BJ (cell line): ENCODE measurements at regions of chr6 and their contacts with region 1.

Region 1: DNA sequence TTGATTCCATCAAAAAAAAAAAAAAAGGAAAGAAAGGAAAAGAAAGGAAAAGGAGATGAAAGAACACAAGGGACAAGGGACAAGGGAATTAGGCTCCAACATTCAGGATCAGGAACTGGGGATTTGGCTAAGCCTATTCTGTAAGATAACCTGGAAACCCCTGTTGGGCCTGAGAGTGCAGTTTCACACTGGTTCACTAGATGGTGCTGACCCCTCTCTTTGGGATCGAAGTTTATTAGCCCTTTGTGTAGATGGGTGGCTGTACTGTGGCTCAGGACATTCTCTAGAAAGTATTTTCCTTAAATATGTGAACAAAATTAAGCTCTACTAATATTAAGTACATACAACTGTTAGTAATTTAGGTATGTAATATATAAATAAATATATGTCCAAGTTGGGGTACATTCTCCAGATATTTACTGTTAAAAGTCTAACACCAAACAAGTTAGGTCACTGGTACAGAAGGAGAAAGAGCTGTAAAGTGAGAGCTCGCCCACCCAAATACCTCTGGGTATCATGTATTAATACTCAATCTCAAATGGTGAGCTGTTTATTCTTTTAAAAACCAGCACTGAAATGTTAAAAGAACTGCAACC is 6.3 kb downstream of the OR2A4 start:
- DNase-seq: peak; percentile 18
- H3K4me3 ChIP-seq: no peak overlapping the region
- H3K27me3 ChIP-seq: no peaks in the 10 kb centered on the region
- CTCF ChIP-seq: peak; percentile 93

Region 2: GRCh38 chr6:131379948-131380347 is 315.0 kb before region 1 on chr6:
- CTCF ChIA-PET with region 1: no interaction called
- POLR2A ChIA-PET with region 1: no interaction called
- DNase-seq: peak; percentile 54
- H3K4me3 ChIP-seq: no peak overlapping the region
- H3K27me3 ChIP-seq: peaks cover 2% of the 10 kb centered on the region
- CTCF ChIP-seq: no peak

Region 3: GRCh38 chr6:131451321-131452144 is 243.4 kb before region 1 on chr6:
- CTCF ChIA-PET with region 1: no interaction called
- POLR2A ChIA-PET with region 1: no interaction called
- DNase-seq: no peak
- H3K4me3 ChIP-seq: no peak overlapping the region
- H3K27me3 ChIP-seq: no peaks in the 10 kb centered on the region
- CTCF ChIP-seq: no peak

Region 4: DNA sequence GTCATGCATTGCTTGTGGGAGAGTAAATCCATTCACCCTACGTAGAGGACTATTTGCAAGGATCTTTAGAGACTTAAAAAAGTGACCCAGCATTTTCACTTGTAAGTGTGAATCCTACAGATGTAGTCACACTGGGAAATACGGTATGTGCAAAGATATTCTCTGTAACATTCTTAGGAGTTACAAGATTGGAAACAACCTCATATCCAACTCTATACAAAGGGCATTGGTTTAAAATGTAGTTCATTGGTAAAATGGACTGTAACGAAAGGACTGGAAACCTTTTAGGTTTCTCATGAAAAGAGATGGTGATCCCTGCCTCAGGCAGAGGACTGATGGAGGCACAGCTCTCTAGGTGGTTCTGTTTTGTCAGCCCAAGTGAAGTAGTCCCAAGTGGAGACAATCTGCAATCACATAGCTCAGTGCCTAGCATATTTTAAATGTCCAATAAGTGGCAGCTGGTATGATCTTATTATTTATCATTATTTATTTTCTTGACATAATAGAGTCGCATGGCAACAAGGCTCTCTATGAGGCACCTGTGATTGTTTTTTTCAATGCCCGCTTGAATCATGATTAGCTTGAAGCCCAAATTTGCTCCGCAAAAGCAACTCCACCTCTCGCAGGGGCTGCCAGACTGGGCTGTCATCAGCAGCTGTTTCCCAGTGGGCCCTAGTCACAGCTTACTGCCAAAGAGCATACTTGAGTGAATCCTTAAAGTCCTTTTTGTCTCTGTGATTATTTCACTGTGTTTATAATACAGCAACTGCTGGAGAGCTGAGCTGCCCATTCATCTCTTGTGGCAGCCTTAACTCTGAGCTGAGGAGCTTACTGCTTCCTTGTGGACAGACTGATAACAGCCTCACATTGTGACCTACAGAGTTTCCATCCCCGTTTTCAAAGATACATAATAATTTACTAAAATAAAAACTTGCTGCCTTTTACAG is 93.1 kb after region 1 on chr6:
- CTCF ChIA-PET with region 1: interaction called, 22 read pairs
- POLR2A ChIA-PET with region 1: no interaction called
- DNase-seq: no peak
- H3K4me3 ChIP-seq: no peak overlapping the region
- H3K27me3 ChIP-seq: no peaks in the 10 kb centered on the region
- CTCF ChIP-seq: peak; percentile 44

Region 5: GRCh38 chr6:131900231-131900630 is 205.3 kb after region 1 on chr6:
- CTCF ChIA-PET with region 1: interaction called, 10 read pairs
- POLR2A ChIA-PET with region 1: no interaction called
- DNase-seq: no peak
- H3K4me3 ChIP-seq: no peak overlapping the region
- H3K27me3 ChIP-seq: 0 out of 2 replicates have a peak, but pooled peaks cover 2% of the 10 kb centered on the region
- CTCF ChIP-seq: no peak

Region 6: DNA sequence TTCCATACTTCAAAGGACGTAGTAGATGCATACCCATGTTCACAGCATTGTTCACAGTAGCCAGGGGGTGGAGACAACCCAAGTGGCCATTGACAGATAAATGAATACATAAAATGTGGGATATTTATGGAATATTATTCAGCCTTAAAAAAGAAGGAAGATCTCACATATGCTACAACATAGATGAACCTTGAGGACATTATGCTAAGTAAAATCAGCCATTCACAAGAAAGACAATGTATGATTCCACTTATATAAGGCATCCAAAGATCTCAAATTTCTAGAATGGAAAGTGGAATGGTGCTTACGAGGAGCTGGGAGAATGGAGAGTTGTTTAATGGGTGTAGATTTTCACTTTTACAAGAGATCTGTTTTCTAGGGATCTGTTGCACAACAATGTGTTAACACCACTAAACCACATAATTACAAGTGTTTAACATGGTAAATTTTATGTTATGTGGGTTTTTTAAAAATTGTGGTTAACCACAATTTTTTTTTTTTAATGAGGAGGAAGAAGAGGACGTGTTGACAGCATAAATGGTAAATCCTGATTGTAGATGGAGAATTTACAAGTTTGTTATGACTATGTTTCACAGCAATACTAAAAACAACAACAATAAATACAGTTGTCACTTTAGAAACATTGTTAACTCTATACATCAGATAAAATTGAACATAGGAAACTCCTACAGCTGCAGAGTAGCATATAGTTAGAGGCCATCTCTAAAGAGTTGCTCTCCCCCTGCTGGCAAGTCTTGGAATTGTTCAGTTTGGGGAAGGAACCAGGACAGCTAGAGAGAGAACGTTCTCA is 214.7 kb after region 1 on chr6:
- CTCF ChIA-PET with region 1: interaction called, 144 read pairs
- POLR2A ChIA-PET with region 1: no interaction called
- DNase-seq: no peak
- H3K4me3 ChIP-seq: no peak overlapping the region
- H3K27me3 ChIP-seq: no peaks in the 10 kb centered on the region
- CTCF ChIP-seq: peak; percentile 84